Prostate gland (tissue), 2 donors: ENCODE measurements at regions of chr3 and their contacts with region 1.

Region 1: GRCh38 chr3:19866751-19867347 is 67.2 kb downstream of the EFHB start:
- DNase-seq: peak; percentile 30
- H3K4me3 ChIP-seq: no peak overlapping the region
- H3K27ac ChIP-seq: no peak overlapping the region
- H3K4me1 ChIP-seq: no peaks in the 10 kb centered on the region
- H3K27me3 ChIP-seq: no peaks in the 10 kb centered on the region
- CTCF ChIP-seq: peak; percentile 27 to 74 (median 64)
- POLR2A ChIP-seq: no peak

Region 2: GRCh38 chr3:19065027-19065426 is 801.8 kb before region 1 on chr3:
- intact Hi-C with region 1: loop called (anchors 10 kb)
- DNase-seq: no peak
- H3K4me3 ChIP-seq: no peak overlapping the region
- H3K27ac ChIP-seq: no peak overlapping the region
- H3K4me1 ChIP-seq: no peaks in the 10 kb centered on the region
- H3K27me3 ChIP-seq: no peaks in the 10 kb centered on the region
- CTCF ChIP-seq: peak in 3 of 4 experiments; percentile 11 to 31 (median 27)
- POLR2A ChIP-seq: no peak